GM10248 (cell line): ENCODE measurements at regions of chr14 and their contacts with region 1.

Region 1: DNA sequence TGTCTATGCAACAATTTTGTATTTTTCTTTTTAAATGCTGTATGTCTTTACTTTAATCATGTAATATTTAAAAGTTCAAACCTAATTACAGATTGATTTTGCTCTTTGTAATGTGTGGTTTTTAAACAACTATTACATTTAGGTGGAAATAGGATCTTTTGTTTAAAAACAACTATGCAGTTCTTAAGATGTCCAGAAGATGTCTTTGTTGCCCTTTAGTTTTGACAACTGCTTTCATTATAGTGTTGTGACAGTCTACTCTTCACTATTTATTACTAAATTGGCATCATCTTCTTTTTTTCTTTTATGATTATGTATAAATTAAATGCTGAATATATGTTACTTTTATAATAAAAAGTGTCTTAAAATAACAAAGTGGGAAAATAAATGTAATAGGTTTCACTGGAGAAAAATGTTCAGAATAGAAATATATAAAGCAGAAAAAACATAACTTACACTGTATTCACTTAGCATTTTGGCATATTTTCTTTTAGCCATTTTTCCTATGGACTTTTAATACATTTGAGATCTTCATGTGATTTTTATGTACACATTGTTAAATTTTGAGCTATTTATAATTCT is 27.1 kb upstream of the PCNX4 start:
- DNase-seq: peak; percentile 42
- CTCF ChIP-seq: peak; percentile 47

Region 2: DNA sequence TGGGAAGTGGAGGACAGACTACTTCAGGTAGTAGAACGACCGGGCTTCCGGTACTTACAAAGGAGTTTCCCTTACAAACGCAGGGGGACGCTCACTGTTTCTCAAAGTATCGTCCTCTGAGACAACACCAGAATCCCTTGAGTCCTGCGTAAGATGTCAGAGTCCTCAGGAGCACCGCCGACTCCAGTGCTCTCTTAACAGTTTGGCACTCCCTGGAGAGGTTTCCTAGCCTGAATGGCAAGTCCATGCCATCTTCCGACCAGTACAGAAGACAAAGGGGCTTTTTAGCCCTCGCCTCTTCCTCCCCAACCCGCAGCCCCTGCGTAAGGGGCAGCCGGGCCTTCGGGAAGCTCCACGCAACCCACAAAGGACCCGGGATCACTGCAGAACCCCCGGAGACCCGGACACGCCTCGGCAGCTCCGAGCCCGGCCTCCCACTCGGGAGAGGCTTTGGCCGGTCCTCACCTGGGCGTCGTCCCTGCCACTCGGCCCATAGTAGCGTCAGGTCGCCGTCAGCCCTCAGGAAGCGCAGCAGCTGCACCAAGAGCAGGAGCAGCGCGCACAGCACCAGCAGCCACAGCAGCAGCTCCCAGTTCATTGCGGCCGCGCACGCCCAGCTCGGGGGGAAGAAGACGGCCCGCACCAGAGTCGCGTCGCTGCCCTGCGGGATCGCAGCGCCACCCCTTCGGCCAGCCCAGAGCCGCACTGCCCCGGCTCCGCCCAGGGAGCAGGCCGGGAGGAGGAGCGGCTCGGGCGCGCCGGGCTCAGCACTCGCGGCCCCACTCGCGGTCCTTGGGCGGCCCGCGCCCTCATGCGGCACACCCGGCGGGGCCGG is 100.3 kb after region 1 on chr14 and contains the start of gene DHRS7:
- CTCF ChIA-PET with region 1: interaction called, 12 read pairs
- POLR2A ChIA-PET with region 1: no interaction called
- DNase-seq: peak; percentile 88
- CTCF ChIP-seq: peak; percentile 80

Region 3: GRCh38 chr14:60561845-60562746 is 497.5 kb after region 1 on chr14:
- CTCF ChIA-PET with region 1: interaction called, 11 read pairs
- POLR2A ChIA-PET with region 1: no interaction called
- DNase-seq: peak; percentile 41
- CTCF ChIP-seq: peak; percentile 85